Sciatic nerve (tissue), 2 donors: ENCODE measurements at regions of chr1 and their contacts with region 1.

Region 1: GRCh38 chr1:52927212-52928014 is at the start of gene SCP2:
- DNase-seq: peak; percentile 90
- ATAC-seq: peak; percentile 96
- total RNA-seq, gene SCP2: 109 TPM

Region 2: GRCh38 chr1:52588535-52588934 is 338.9 kb before region 1 on chr1:
- intact Hi-C with region 1: no loop called
- DNase-seq: no peak
- ATAC-seq: no peak

Region 3: GRCh38 chr1:52937433-52938182 is 10.2 kb after region 1 on chr1:
- intact Hi-C with region 1: no loop called
- DNase-seq: no peak
- ATAC-seq: no peak

Region 4: DNA sequence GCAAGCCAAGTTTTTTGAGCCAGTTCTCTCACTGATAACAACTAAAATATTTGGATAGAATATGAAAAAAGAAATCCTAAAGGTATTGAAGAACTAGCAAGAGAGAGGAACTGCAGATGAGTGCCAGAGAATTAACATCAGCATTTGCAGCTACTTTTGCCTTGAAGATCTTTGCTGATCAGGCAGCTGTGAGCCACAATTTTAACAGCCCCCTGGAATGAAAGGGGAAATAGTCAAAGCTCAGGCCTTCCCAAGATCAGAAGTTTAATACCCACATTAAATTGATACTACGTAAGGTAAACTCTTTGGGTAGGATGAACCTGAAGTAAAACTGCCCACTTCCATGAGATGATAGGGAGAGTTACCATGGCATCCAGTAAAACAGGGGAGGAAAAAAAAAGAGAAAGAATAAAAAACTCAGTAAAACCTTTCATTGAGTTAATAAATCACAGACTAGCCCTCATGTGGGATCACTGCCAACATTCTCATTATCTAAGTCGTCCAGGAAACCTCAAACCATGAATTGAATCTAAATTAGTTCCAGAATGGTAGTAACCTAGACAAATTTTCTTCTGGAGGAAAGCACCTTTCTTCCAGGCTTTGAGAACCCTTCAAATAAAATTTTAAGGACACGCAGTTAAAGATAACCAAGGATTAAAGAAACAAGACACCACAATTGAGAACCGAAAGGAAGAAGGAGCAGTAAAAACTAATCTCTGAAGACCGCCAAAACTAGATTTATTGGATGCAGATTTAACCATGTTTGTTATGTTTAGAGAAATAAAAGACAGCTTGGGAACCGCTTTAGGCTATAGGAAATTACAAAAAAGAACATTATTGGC is 27.9 kb after region 1 on chr1:
- intact Hi-C with region 1: no loop called
- DNase-seq: no peak
- ATAC-seq: peak; percentile 36

Region 5: GRCh38 chr1:53196485-53197270 is 269.3 kb after region 1 on chr1 and contains the start of gene CPT2:
- intact Hi-C with region 1: loop called (anchors 10 kb)
- DNase-seq: peak; percentile 97
- ATAC-seq: peak; percentile 97
- total RNA-seq, gene CPT2: 10.1 TPM